H1 (cell line): ENCODE measurements at regions of chr12 and their contacts with region 1.

Region 1: DNA sequence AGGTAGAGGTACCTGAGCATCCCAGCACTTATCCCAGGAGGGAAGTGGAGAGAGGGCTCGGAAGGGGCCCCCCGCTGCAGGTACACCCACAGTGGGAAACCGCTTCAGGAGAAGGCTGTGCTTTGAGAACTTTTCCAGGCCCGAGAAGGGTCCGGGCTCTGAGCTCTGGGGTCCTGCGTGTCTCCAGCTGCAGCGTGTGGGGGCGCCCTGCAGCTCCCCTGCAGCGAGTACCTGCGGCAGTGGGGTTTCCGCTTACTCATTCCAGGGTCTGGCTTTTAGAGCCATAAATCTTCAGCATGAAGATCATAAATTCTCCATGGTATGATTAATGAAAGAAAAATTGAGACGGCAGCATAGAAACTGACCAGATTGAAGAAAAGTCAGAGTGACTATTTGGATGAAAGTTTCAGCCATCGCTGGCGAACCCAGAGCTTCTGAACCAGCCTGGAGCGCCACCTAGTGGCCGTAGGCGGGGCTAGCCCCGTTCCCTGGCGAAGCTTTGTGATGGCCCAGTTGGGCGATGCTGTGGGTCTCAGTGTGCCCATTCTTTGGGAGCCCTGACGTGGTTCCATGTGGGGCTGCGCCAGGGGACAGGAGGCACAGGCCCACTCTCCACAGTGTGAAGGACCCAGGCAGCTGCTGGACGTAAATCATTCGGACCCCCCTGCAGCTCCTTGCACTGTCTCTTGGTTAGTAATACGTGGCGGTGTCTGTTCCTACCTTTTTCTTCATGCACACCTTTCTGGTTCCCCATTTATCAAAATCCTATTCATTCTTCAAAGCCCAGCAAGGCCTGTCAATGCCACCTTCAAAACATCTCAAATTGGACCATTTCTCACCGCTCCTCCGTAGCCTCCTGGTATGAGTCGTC is 198.2 kb downstream of the TSPAN9 start:
- DNase-seq: peak; percentile 23 to 97
- H3K4me3 ChIP-seq: 0 out of 8 replicates have a peak overlapping the region, but pooled peaks of 1 of the 4 experiments have one; percentile 20
- H3K27ac ChIP-seq: no peak overlapping the region
- H3K4me1 ChIP-seq: peaks cover 0 to 15% (median 7%) of the 10 kb centered on the region in 4 experiments
- H3K27me3 ChIP-seq: no peaks in the 10 kb centered on the region
- CTCF ChIP-seq: peak in 2 of 3 experiments; percentile 95 to 96; a peak in 3 of 4 replicates
- EP300 ChIP-seq: no peak
- POLR2A ChIP-seq: no peak
- RAD21 ChIP-seq: peak; percentile 92 to 96

Region 2: DNA sequence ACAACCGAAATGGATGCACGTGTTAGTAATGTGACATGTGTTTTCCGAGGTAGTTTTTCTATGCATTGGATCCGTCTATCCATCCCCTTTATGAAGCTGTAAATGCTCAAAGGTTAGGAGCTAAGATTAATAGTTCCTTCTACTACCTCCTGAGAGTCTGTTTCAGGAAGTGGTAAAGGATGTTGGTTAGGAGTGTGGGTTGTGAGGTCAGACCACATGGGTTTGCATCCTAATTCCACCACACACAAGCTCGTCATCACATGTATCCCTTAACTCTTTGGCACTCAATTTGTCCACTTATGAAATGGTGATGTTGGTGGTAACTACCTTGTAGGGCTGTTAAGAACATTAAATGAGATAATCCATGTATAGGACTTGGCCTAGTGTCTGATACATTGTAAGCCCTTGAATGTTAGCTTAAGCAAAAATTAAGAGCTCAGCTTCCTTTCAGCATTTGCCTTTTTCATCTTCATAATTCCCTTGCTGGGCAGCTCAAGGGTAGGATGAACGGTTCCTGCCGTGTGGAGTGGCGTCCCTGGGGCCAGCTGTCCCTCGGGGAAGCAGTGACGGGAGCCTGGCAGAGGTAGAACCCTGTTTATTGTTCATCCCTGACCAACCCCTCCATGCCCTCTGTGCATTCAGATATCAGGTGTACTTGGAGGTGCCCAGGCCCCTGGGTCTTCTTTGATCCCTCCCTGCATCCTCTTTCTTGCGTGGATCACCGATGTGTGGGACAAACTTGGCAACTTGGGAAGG is 145.9 kb before region 1 on chr12:
- CTCF ChIA-PET with region 1: interaction called, 226 read pairs
- POLR2A ChIA-PET with region 1: no interaction called
- DNase-seq: no peak
- H3K4me3 ChIP-seq: no peak overlapping the region
- H3K27ac ChIP-seq: no peak overlapping the region
- H3K4me1 ChIP-seq: peaks cover 0 to 5% (median 2%) of the 10 kb centered on the region in 4 experiments; a peak in 2 of 7 replicates
- H3K27me3 ChIP-seq: no peaks in the 10 kb centered on the region
- CTCF ChIP-seq: no peak
- EP300 ChIP-seq: no peak
- POLR2A ChIP-seq: no peak
- RAD21 ChIP-seq: no peak

Region 3: DNA sequence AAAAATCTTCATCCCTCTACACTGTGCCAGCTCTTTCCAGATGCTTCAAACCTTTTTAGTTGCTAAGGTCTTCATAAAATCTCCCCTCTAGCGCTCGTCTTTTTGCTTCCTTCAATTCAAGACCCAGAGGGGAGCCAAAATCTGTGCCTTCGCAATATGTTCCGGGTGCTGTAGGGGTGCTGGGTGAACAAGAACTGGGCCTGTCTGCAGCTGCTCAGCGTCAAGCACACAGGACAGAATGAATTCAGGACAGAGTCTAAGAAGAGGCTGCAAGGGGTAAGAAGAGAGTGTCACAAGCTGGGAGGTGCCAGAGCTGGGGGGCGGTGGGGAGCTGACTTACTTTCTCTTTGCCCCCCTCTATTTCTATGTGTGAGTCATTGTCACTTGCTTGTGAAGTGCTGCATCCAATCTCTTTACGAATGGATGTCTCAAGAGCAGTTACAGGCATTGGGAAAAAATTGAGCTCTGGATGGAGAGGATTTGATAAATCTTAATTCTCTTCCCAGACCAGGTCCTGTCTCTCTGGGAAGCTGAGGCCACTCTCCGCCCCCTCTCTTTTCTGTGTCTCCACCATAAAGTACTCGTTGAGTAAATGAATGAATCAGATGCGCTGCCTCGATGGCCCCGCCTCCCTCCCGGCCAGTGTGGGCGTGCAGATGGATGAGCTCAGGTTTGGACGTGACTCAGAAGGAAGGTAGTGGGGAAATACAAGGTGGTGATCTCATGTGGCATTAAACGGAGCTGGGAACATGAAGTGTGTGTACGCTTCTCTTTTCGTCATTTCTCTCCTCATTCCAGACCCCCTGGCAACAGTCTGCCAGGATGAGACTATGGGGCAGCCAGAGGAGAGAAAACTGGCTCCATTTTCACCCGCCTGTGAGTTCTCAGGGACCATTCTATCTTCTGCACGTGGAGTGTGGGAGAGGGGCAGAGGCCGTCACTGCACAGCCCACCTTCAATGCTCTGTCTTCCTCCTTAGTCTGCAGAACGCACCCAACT is 106.9 kb before region 1 on chr12:
- CTCF ChIA-PET with region 1: interaction called, 22 read pairs
- POLR2A ChIA-PET with region 1: no interaction called
- DNase-seq: peak in 1 of 2 experiments; percentile 33
- H3K4me3 ChIP-seq: no peak overlapping the region
- H3K27ac ChIP-seq: no peak overlapping the region
- H3K4me1 ChIP-seq: peaks cover 8 to 23% (median 19%) of the 10 kb centered on the region in 4 experiments
- H3K27me3 ChIP-seq: no peaks in the 10 kb centered on the region
- CTCF ChIP-seq: no peak
- EP300 ChIP-seq: no peak
- POLR2A ChIP-seq: no peak
- RAD21 ChIP-seq: no peak

Region 4: GRCh38 chr12:3218228-3219171 is 56.9 kb before region 1 on chr12:
- CTCF ChIA-PET with region 1: interaction called, 122 read pairs
- POLR2A ChIA-PET with region 1: no interaction called
- DNase-seq: no peak
- H3K4me3 ChIP-seq: no peak overlapping the region
- H3K27ac ChIP-seq: no peak overlapping the region
- H3K4me1 ChIP-seq: peaks cover 3 to 14% (median 10%) of the 10 kb centered on the region in 4 experiments
- H3K27me3 ChIP-seq: no peaks in the 10 kb centered on the region
- CTCF ChIP-seq: no peak
- EP300 ChIP-seq: no peak
- POLR2A ChIP-seq: no peak
- RAD21 ChIP-seq: no peak

Region 5: DNA sequence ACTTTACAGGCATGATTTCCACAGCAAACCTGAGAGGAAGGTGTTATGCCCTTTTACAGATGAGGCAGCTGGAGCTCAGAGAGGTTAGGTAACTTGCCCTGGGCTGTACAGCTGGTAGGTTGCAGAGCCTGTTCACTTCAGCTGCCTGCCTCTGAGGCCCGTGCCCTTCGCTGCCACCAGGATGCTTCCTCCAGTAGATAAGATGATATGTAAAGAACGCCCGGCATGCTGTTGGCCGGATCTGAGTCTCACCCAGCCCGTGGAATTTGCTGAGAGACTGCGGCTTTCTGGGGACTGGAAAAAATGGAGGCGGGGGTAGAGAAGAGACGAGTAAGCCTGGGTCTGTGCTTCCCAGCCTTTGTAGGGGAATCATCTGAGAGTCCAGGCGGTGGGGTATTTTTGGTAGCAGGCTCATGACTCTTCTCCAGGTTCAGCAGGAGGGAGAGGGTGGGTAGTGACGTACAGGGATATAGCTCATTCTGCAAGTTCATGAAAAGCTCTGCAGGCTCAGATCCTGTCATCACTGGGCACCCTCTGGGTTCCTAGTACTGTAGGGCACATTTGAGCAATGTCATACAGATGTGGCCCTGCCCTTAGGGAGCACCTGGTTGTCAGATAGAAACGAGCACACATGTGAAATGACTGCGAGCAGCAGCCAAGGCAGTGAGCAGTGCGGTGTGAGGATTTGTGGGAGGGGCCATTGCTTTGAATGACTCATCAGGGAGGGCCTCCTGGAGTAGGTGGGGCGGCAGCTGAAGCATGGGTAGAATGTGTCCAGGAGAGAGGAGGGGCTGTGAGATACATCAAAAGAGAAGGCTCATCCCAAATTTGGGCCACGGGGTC is 38.8 kb before region 1 on chr12:
- CTCF ChIA-PET with region 1: interaction called, 28 read pairs
- POLR2A ChIA-PET with region 1: interaction called, 5 read pairs
- DNase-seq: no peak
- H3K4me3 ChIP-seq: no peak overlapping the region
- H3K27ac ChIP-seq: no peak overlapping the region
- H3K4me1 ChIP-seq: peaks cover 3 to 12% (median 9%) of the 10 kb centered on the region in 4 experiments
- H3K27me3 ChIP-seq: no peaks in the 10 kb centered on the region
- CTCF ChIP-seq: no peak
- EP300 ChIP-seq: no peak
- POLR2A ChIP-seq: no peak
- RAD21 ChIP-seq: no peak

Region 6: GRCh38 chr12:3261782-3262359 is 13.5 kb before region 1 on chr12:
- CTCF ChIA-PET with region 1: interaction called, 77 read pairs
- POLR2A ChIA-PET with region 1: no interaction called
- DNase-seq: no peak
- H3K4me3 ChIP-seq: no peak overlapping the region
- H3K27ac ChIP-seq: no peak overlapping the region
- H3K4me1 ChIP-seq: no peaks in the 10 kb centered on the region
- H3K27me3 ChIP-seq: no peaks in the 10 kb centered on the region
- CTCF ChIP-seq: no peak
- EP300 ChIP-seq: no peak
- POLR2A ChIP-seq: no peak
- RAD21 ChIP-seq: no peak